ENCODE measurements at regions of chrX and their contacts with region 1.

Region 1: DNA sequence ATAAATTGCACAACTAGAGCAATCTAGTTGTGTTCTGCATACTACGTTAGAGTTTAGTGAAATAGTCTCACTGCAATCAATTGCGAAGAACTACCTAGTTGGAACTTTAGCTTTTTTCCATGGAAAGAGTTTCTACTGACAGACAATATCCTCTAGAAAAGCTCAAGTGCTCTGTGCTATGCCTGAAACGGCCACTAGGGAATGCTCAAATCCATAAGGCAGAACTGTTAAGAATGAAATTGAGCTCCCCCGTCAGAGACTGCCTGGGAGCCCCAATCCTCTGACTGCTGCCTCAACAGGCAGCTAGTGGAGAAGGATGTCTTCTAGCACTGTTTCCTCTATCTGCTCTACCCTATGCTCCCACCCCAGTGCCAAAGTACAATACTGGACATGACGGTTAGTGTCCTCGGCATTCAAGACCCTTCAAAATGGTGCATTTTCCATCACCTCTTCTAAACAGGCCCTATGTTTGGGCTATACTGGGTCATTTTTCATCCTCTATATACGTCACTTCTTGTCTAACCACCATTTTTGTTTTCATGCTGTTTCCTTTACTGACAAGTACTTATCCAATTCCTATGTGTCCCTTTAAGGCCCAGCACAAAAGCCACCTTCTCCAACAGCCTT is 35.3 kb downstream of the FRMD7 start:
- DNase-seq: peak; percentile 7
- H3K4me3 ChIP-seq: no peak overlapping the region
- H3K27me3 ChIP-seq: no peaks in the 10 kb centered on the region
- CTCF ChIP-seq: peak; percentile 71

Region 2: DNA sequence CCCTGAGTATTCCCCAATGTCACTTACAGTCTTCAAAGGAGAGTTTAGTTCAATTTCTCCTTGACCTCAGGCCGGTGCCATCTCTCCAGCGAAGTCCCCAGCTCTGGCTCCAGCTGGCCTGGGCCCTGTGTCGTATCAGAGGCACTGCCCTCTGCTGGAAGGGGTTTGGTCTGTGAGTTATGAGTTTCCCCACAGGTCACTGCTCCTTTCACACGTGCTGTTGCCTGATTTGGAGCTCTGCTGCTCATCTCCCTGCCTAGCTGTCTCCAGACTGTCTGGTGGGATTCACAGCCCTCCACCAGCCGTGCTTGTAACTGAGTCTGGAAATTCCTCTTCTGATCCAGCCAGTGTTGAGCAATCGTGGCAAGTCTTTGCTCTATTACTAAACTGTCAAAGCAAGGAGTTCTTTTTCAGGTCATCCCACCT is 126.8 kb after region 1 on chrX and contains the start of gene RAP2C:
- CTCF ChIA-PET with region 1: interaction called, 34 read pairs
- POLR2A ChIA-PET with region 1: no interaction called
- DNase-seq: no peak
- H3K4me3 ChIP-seq: peak within 1 kb of the TSS; percentile 73
- H3K27me3 ChIP-seq: no peaks in the 10 kb centered on the region
- CTCF ChIP-seq: peak; percentile 65
- polyA plus RNA-seq, gene RAP2C: 9.0 and 14.0 TPM in 2 replicates

Region 3: GRCh38 chrX:132375934-132376333 is 283.4 kb after region 1 on chrX:
- CTCF ChIA-PET with region 1: no interaction called
- POLR2A ChIA-PET with region 1: no interaction called
- DNase-seq: no peak
- H3K4me3 ChIP-seq: no peak overlapping the region
- H3K27me3 ChIP-seq: no peaks in the 10 kb centered on the region
- CTCF ChIP-seq: peak; percentile 17; the same call in 1 of the 2 replicates